ENCODE measurements at regions of chr6 and their contacts with region 1.

Region 1: GRCh38 chr6:99868074-99868702 is 125.8 kb downstream of the MCHR2 start:
- DNase-seq: peak; percentile 70 to 97 (median 85)

Region 2: GRCh38 chr6:99905209-99906106 is 37.3 kb after region 1 on chr6:
- intact Hi-C with region 1: loop called (anchors 5 kb)
- DNase-seq: no peak

Region 3: DNA sequence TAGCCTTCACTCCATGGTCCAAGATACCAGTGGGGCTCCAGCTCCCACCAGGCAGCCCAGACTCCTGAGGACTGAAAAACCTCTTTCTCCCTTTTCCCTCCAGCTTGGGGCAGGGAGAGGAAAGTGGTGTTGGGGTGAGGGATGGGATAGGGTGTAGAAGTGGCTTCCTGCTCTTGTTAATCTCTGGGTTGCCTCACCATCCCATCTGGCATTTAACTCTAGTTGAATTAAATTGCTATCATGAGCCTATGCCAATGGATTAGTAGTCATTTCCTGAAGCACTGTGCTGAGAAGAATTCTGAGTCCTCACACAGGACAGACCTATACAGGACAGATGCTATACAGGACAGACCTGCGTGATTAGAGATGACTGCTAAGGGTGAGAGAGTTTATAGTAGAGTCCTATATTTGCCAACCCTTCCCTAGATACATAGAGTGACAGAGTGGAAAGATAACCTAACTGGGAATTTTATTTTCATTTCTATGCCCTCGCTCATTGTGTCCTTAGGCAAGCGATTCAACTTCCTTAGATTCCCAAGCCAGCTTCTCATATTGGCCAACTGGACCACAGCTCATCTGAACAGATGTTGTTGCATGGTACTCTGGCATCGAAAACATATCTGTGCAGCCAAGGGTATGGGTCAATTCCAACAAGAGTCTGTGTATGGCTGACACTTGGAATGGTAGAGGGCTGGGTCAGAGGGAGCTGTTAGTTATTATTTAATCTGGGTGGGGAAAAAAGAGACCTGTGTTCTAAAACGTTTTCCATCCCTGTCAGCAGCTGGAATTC is 83.0 kb after region 1 on chr6:
- intact Hi-C with region 1: no loop called
- DNase-seq: no peak

Region 4: GRCh38 chr6:99993533-99994251 is 125.5 kb after region 1 on chr6 and contains the start of gene MCHR2:
- intact Hi-C with region 1: loop called (anchors 5 kb)
- DNase-seq: peak in 6 of 10 donors; percentile 9 to 87 (median 46)

Region 5: DNA sequence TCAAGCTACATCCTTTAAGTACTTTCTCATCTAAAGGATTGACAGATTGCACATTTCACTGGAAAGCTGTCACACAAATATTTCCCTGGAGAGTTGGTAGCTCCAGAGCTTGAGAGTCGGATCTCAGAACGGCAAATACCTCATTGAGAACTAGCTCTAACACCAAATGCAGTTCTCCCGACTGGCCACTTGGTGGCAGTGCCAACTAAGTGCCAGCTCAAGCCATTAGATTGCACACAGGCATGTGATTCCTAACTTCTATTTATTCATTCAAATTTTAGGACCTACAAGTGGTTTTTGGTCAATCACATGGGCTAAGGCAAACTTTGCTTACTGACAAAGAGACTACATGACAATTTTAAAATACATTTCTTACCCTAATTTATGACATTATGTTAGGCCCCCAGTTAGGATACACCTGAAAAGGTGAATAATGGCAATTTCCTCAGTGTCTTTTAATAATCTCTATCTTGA is 133.8 kb after region 1 on chr6:
- intact Hi-C with region 1: loop called (anchors 5 kb)
- DNase-seq: peak; percentile 36 to 93 (median 64)

Region 6: DNA sequence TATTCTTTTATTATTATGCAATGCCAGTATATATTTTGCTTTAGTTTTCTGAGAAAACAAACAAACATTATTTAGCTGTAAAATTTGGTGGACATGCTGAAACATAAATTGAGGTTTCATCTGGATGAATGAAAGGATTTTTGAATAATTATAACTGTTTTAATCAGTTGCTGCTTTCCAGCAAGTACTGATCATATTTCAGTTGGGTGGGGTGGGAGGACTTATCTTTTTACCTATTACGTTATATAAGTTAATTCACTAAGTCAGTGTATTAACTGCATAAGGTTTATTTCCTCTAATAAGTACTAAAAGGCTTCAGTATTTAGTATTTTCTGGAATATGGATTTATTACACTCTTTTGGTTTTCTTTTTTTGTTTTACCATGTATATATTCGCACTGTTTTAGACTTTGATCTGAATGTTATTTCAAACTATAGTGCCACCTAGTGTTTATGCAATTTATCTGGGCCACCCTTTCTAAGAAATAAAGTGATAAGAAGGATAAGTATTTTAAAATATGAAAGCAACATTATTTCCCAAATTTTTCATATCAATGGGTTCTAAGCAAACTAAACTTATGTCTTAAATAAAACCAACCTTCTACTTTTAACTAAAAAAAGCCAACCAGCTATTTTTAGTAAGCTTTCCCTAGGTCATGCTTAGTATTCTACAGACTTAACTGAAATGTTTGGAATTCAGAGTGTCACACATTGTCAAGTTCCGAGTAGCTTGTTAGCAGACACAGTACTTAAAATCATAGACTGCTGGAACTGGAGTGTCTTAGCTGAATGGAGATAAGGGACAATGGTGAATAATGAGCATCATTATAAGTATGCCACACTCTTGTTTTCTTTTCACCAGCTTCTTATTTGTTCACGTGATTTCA is 231.2 kb after region 1 on chr6:
- intact Hi-C with region 1: loop called (anchors 2 kb)
- DNase-seq: no peak

Region 7: DNA sequence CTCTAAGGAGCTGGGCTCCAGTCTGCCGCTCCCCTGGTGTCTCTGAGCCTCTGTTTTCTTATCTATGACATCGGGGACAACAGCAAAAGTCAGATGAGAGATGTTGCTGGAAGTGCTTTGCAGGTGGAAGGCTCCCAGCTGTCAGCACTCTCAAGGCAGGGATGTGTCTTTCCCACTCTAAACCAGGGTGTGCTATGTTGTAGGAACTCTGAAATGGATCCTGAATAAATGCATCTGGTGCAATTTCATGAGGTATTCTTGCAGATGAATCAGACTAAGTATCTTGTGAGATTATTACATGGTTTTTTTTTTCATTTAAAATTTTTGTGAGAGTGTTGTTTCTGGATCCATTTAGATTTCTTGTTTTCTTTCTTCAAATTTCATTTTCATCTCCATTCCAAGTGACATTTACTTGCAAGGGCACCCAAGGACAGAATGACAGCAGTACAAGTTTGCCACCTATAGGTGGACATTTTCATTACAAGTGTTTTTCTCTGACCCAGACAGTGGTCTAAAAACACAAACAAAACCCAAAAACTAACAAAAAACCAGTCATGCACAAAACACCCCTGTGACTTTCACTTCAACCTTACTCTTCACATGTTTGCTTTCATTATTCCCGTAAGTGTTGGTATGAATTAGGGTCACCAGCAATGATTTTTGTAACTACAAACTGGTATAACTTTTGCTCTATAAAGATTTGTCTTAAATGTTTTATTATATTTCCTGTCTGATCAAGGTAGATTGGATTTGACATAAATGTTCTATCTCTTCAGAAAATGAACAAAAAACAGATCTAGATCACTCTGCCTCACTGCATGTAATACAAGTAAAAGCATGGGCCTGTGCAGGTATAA is 611.2 kb after region 1 on chr6:
- intact Hi-C with region 1: loop called (anchors 5 kb)
- DNase-seq: no peak

Measured in posterior cingulate gyrus (tissue), 11 donors.